GM12878 (cell line): ENCODE measurements at regions of chr1 and their contacts with region 1.

Region 1: DNA sequence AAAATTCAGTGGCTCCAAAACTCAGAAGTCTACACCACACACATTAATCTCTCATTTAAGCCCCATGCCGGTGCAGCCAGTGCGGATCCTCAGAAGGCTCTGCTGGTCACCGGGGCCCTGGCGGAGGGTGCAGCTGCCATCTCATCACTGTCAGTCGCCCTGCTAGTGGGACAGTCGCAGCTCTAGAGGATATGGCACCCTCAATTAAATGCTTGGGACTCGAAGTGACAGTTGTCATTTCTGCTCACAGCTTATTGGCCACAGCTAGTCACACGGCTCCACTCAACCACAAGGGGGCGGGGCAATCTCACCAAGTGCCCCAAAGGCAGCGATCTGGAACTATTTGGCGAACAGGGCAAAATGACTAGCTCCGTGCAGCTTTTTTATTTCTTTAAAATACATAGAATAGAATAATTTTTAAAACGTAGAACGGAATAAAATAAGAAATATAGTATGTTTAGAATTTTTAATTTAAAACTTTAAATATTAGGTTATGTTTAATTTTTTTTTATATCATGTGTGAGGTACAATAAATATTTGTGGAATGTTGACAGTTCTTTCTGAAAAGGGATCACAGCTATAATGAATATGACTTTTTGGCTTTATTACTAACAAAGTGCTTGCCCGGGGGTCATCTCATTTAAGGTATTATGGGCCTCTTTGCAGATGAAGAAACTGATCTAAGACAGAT is 8.0 kb upstream of the MAN1C1 start:
- DNase-seq: peak; percentile 38
- ATAC-seq: peak; percentile 98
- H3K4me3 ChIP-seq: no peak overlapping the region
- H3K27ac ChIP-seq: no peak overlapping the region
- H3K4me1 ChIP-seq: peaks cover 6% of the 10 kb centered on the region
- H3K27me3 ChIP-seq: peaks cover 0 to 5% of the 10 kb centered on the region in 2 experiments; a peak in 2 of 4 replicates
- CTCF ChIP-seq: peak; percentile 24 to 64 (median 33); a peak in 4 of 6 replicates
- EP300 ChIP-seq: no peak
- POLR2A ChIP-seq: no peak
- RAD21 ChIP-seq: peak; percentile 47; the same call in 1 of the 2 replicates

Region 2: GRCh38 chr1:25549273-25550154 is 59.1 kb before region 1 on chr1:
- CTCF ChIA-PET with region 1: interaction called, 4 read pairs
- POLR2A ChIA-PET with region 1: interaction called, 3 read pairs
- RAD21 ChIA-PET with region 1: interaction called, 11 read pairs
- SMC1A ChIA-PET with region 1: interaction called, 15 read pairs
- in situ Hi-C with region 1: no loop called
- intact Hi-C with region 1: no loop called
- DNase-seq: peak; percentile 94
- ATAC-seq: peak; percentile 95
- H3K4me3 ChIP-seq: peak overlapping the region; percentile 49; the same call in 1 of the 2 replicates
- H3K27ac ChIP-seq: peak overlapping the region; percentile 85
- H3K4me1 ChIP-seq: peaks cover 63% of the 10 kb centered on the region
- H3K27me3 ChIP-seq: no peaks in the 10 kb centered on the region
- CTCF ChIP-seq: no peak
- EP300 ChIP-seq: peak in 1 of 2 experiments; percentile 51; a peak in 1 of 4 replicates
- POLR2A ChIP-seq: peak; percentile 59
- RAD21 ChIP-seq: no peak; the same call in 1 of the 2 replicates

Region 3: GRCh38 chr1:25572708-25573600 is 35.7 kb before region 1 on chr1:
- CTCF ChIA-PET with region 1: interaction called, 10 read pairs
- POLR2A ChIA-PET with region 1: no interaction called
- RAD21 ChIA-PET with region 1: no interaction called
- SMC1A ChIA-PET with region 1: no interaction called
- in situ Hi-C with region 1: no loop called
- intact Hi-C with region 1: no loop called
- DNase-seq: no peak
- ATAC-seq: peak; percentile 95
- H3K4me3 ChIP-seq: no peak overlapping the region
- H3K27ac ChIP-seq: no peak overlapping the region
- H3K4me1 ChIP-seq: no peaks in the 10 kb centered on the region
- H3K27me3 ChIP-seq: no peaks in the 10 kb centered on the region
- CTCF ChIP-seq: peak; percentile 42 to 85 (median 65)
- EP300 ChIP-seq: no peak
- POLR2A ChIP-seq: no peak
- RAD21 ChIP-seq: peak; percentile 51

Region 4: GRCh38 chr1:25692560-25692959 is 83.9 kb after region 1 on chr1:
- CTCF ChIA-PET with region 1: interaction called, 3 read pairs
- POLR2A ChIA-PET with region 1: no interaction called
- RAD21 ChIA-PET with region 1: no interaction called
- SMC1A ChIA-PET with region 1: interaction called, 3 read pairs
- in situ Hi-C with region 1: no loop called
- intact Hi-C with region 1: loop called (anchors 2 kb)
- DNase-seq: no peak
- ATAC-seq: peak; percentile 88
- H3K4me3 ChIP-seq: no peak overlapping the region
- H3K27ac ChIP-seq: no peak overlapping the region
- H3K4me1 ChIP-seq: no peaks in the 10 kb centered on the region
- H3K27me3 ChIP-seq: peaks cover 4 to 15% of the 10 kb centered on the region in 2 experiments
- CTCF ChIP-seq: peak; percentile 46 to 72 (median 67)
- EP300 ChIP-seq: no peak
- POLR2A ChIP-seq: no peak
- RAD21 ChIP-seq: peak; percentile 58

Region 5: DNA sequence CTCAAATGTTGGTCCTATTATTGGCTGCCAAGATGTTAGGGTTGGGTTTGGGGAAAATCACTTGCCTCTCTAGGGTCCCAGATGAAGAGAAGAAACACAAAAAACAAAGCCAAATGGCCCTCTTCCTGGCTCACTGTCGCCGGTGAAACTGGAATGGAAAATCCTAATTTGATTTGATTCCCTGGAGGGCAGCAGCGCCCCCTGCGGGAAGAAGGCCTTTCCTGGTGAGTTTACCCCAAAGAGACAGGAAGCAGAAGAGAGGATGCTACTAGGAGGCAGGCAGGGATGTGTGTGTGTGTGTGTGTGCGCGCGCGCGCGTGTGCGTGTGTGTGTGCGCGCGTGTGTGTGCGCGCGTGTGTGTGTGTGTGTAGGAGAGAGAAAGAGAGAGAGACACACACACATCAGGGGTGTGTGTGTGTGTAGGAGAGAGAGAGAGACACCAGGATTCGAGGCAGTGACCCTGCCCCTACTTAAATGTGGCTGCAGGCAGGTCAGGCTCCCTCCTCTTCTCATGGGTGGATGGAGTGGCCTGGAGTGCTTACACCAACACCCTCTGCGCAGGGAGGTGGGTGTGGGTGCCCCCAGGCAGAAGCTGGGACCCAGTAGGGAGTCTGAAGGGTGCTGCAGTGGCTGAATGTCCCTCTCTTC is 188.3 kb after region 1 on chr1:
- CTCF ChIA-PET with region 1: interaction called, 19 read pairs
- POLR2A ChIA-PET with region 1: no interaction called
- RAD21 ChIA-PET with region 1: interaction called, 8 read pairs
- SMC1A ChIA-PET with region 1: interaction called, 13 read pairs
- in situ Hi-C with region 1: loop called (anchors 5 kb)
- intact Hi-C with region 1: loop called (anchors 2 kb)
- DNase-seq: no peak
- ATAC-seq: peak; percentile 70
- H3K4me3 ChIP-seq: no peak overlapping the region
- H3K27ac ChIP-seq: no peak overlapping the region
- H3K4me1 ChIP-seq: peaks cover 2% of the 10 kb centered on the region
- H3K27me3 ChIP-seq: no peaks in the 10 kb centered on the region; a peak in 1 of 4 replicates
- CTCF ChIP-seq: peak; percentile 71 to 82 (median 77)
- EP300 ChIP-seq: no peak
- POLR2A ChIP-seq: no peak
- RAD21 ChIP-seq: peak; percentile 86

Region 6: GRCh38 chr1:25802915-25803314 is 194.3 kb after region 1 on chr1:
- CTCF ChIA-PET with region 1: interaction called, 19 read pairs
- POLR2A ChIA-PET with region 1: no interaction called
- RAD21 ChIA-PET with region 1: interaction called, 8 read pairs
- SMC1A ChIA-PET with region 1: interaction called, 13 read pairs
- in situ Hi-C with region 1: loop called (anchors 5 kb)
- intact Hi-C with region 1: no loop called
- DNase-seq: no peak
- ATAC-seq: peak; percentile 75
- H3K4me3 ChIP-seq: no peak overlapping the region
- H3K27ac ChIP-seq: no peak overlapping the region
- H3K4me1 ChIP-seq: peaks cover 33% of the 10 kb centered on the region
- H3K27me3 ChIP-seq: no peaks in the 10 kb centered on the region
- CTCF ChIP-seq: no peak
- EP300 ChIP-seq: no peak
- POLR2A ChIP-seq: no peak
- RAD21 ChIP-seq: no peak